ENCODE measurements at regions of chr6 and their contacts with region 1.

Region 1: GRCh38 chr6:30730601-30731435 is 10.7 kb downstream of the TUBB start:
- DNase-seq: no peak
- ATAC-seq: peak; percentile 87
- H3K4me3 ChIP-seq: no peak overlapping the region
- H3K27ac ChIP-seq: peak overlapping the region; percentile 32; the same call in 1 of the 2 replicates
- H3K4me1 ChIP-seq: peaks cover 13% of the 10 kb centered on the region
- H3K27me3 ChIP-seq: no peaks in the 10 kb centered on the region
- CTCF ChIP-seq: peak; percentile 83 to 96 (median 90)
- EP300 ChIP-seq: no peak
- POLR2A ChIP-seq: peak; percentile 42; the same call in 1 of the 2 replicates
- RAD21 ChIP-seq: peak; percentile 83

Region 2: DNA sequence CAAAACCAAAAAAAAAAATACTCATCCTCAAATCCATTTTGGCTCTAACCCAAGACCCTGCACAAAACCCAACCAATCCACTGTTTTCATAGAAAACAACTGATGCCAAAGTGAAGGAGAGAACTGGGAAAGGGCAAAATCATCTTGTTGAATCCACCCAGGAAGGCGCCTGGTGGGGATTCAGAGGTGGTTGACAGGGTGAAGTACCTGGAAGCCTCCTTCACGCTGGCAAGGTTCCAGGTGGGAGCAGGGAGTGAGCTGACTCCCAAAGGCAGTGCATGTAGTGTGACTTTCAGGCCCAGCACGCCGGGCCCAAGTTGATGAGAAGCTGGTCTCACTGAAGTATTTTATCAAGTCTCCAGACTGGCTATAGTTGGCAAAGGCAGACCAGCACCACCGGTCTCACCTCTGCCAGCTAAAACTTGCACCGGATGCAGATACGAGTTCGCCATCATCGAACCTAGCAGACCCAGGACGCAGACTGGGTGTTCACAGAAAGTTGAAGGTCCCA is 130.3 kb before region 1 on chr6:
- CTCF ChIA-PET with region 1: interaction called, 18 read pairs
- POLR2A ChIA-PET with region 1: no interaction called
- RAD21 ChIA-PET with region 1: no interaction called
- SMC1A ChIA-PET with region 1: interaction called, 6 read pairs
- in situ Hi-C with region 1: no loop called
- intact Hi-C with region 1: no loop called
- DNase-seq: no peak
- ATAC-seq: no peak
- H3K4me3 ChIP-seq: no peak overlapping the region
- H3K27ac ChIP-seq: no peak overlapping the region
- H3K4me1 ChIP-seq: no peaks in the 10 kb centered on the region; the same call in 1 of the 2 replicates
- H3K27me3 ChIP-seq: no peaks in the 10 kb centered on the region
- CTCF ChIP-seq: no peak
- EP300 ChIP-seq: no peak
- POLR2A ChIP-seq: peak; percentile 47; the same call in 1 of the 2 replicates
- RAD21 ChIP-seq: no peak

Region 3: DNA sequence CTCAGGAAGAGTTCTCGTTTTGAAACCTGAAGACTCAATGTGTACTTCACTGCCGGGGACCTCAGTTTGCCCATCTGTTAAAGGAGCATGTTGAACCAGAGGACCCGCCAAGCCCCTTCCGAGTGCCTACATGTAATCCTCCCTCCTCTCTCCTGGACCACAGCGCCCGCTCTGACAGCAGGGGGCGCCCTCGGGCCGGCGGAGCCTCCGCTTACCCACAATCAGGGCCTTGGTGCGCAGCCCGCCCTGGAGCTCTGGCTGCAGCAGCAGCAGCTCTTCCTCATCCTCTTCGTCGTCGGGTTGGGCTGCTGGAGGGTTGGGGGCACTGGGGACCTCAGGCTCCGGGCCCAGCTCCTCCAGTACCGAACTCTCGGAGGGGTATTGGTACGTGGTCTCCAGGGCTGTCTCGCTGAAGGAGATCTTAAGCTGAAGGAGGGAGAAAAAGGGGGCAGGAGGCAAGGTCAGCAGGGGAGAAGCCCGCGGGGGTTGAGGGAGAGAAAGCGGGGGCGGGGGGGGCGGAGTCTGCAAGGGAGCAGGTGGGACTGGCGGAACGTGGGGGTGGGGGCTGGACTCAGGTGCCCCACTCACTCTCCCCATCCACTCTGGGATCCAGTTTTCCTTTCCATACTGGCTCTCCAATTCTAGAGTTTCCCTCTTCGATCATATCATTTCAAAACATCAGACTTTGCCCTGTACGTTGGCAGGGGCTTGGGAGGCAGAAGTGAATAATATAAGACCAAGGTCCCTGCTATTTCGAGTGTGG is 51.7 kb before region 1 on chr6:
- CTCF ChIA-PET with region 1: interaction called, 487 read pairs
- POLR2A ChIA-PET with region 1: interaction called, 36 read pairs
- RAD21 ChIA-PET with region 1: interaction called, 232 read pairs
- SMC1A ChIA-PET with region 1: interaction called, 265 read pairs
- in situ Hi-C with region 1: no loop called
- intact Hi-C with region 1: loop called (anchors 2 kb)
- DNase-seq: no peak
- ATAC-seq: peak; percentile 79
- H3K4me3 ChIP-seq: peak overlapping the region; percentile 100
- H3K27ac ChIP-seq: peak overlapping the region; percentile 65
- H3K4me1 ChIP-seq: peaks cover 8% of the 10 kb centered on the region
- H3K27me3 ChIP-seq: no peaks in the 10 kb centered on the region
- CTCF ChIP-seq: peak; percentile 97 to 98 (median 98); a peak in 5 of 6 replicates
- EP300 ChIP-seq: no peak
- POLR2A ChIP-seq: 0 out of 2 replicates have a peak, but pooled peaks have one; percentile 29
- RAD21 ChIP-seq: peak; percentile 97

Region 4: DNA sequence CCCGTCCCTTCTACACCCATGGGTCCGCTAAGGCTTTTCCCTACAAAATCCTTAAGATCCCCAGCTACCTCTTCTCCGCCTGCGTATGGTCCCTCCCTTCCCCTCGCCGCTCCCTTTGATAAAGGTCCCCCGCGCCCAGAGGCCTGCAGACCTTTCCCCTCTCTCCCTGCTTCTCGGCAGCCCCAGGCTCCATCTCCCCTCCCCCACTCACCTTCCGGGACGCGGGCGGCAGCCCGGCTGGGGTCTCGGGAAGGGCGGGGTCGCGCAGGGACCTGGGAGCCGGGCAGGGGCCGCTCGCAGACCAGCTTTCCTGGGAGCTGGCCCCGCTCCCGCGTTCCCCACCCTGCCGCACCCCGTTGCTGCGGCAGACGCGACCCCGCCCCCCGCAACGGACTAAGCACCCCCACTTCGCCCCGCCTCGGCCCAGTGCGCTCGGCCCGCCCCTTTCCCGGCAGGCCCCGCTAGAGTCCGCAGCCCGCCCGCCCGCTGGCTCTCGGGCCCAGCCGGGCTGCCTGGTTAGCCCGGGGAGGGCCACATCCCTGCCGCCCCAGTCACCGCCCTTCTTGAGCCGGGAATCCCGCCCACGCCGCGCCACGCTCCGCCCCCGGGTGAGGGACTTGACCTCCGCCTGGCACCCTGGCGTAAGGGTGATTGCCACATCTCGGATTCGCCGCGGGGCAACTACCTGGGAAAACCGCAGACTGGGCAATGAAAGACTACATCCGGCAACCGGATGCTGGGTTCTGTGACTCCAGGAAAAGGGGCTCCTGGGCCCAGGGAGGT is 11.7 kb after region 1 on chr6 and contains the start of gene FLOT1:
- CTCF ChIA-PET with region 1: interaction called, 9 read pairs
- POLR2A ChIA-PET with region 1: interaction called, 3 read pairs
- RAD21 ChIA-PET with region 1: interaction called, 5 read pairs
- SMC1A ChIA-PET with region 1: interaction called, 20 read pairs
- in situ Hi-C with region 1: no loop called
- intact Hi-C with region 1: no loop called
- DNase-seq: peak; percentile 80
- ATAC-seq: peak; percentile 80
- H3K4me3 ChIP-seq: peak within 1 kb of the TSS; percentile 95
- H3K27ac ChIP-seq: peak within 1 kb of the TSS; percentile 72
- H3K4me1 ChIP-seq: peaks cover 23% of the 10 kb centered on the region
- H3K27me3 ChIP-seq: no peaks in the 10 kb centered on the region
- CTCF ChIP-seq: no peak
- EP300 ChIP-seq: peak in 1 of 2 experiments; percentile 12; a peak in 1 of 4 replicates
- POLR2A ChIP-seq: peak; percentile 83
- RAD21 ChIP-seq: no peak
- polyA plus RNA-seq, gene FLOT1: 12.3 to 16.8 TPM

Region 5: DNA sequence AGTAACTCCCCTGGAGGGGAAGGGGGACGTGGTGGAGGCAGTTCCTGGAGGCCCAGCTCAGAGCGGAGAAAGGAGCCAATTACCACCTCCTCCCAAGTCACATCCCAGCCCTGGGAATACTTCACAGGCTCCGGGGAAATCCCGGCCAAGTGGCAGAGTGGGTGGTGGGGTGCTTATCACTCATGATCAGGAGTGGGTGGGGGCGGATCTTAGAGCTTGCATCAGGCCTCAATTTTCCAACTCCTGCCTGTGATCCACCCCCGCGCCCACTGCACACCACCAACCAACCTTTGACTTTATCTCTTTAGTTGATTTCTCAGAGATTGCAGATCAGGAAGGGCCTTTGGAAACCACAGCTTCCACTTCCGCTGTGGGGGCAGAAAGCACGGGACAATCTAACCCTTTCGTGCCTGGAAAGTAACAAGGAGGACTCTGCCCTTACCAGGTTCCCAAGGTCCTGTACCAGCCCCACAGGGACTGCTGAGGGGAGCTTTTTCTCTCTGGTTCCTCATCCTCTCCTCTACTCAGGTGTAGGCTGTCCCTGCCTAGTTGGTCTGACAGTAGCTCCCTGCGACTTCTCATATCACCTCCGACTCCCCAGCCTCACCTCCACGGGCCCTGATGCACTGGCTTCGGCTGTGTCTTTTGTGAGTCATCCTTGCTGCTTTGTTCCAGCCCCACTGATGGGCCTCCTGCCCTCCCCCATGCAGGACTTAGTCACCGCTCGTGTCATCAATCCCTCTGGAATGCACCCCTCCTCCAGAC is 38.5 kb after region 1 on chr6:
- CTCF ChIA-PET with region 1: interaction called, 12 read pairs
- POLR2A ChIA-PET with region 1: interaction called, 89 read pairs
- RAD21 ChIA-PET with region 1: interaction called, 48 read pairs
- SMC1A ChIA-PET with region 1: interaction called, 122 read pairs
- in situ Hi-C with region 1: no loop called
- intact Hi-C with region 1: no loop called
- DNase-seq: no peak
- ATAC-seq: peak; percentile 38
- H3K4me3 ChIP-seq: no peak overlapping the region
- H3K27ac ChIP-seq: no peak overlapping the region; the same call in 1 of the 2 replicates
- H3K4me1 ChIP-seq: peaks cover 33% of the 10 kb centered on the region
- H3K27me3 ChIP-seq: no peaks in the 10 kb centered on the region
- CTCF ChIP-seq: no peak
- EP300 ChIP-seq: peak in 1 of 2 experiments; percentile 56; a peak in 2 of 4 replicates
- POLR2A ChIP-seq: no peak
- RAD21 ChIP-seq: no peak

Region 6: GRCh38 chr6:30877419-30878371 is 146.9 kb after region 1 on chr6:
- CTCF ChIA-PET with region 1: interaction called, 12 read pairs
- POLR2A ChIA-PET with region 1: interaction called, 4 read pairs
- RAD21 ChIA-PET with region 1: interaction called, 9 read pairs
- SMC1A ChIA-PET with region 1: interaction called, 12 read pairs
- in situ Hi-C with region 1: no loop called
- intact Hi-C with region 1: loop called (anchors 2 kb)
- DNase-seq: peak; percentile 59
- ATAC-seq: peak; percentile 91
- H3K4me3 ChIP-seq: peak overlapping the region; percentile 61
- H3K27ac ChIP-seq: peak overlapping the region; percentile 68
- H3K4me1 ChIP-seq: peaks cover 21% of the 10 kb centered on the region
- H3K27me3 ChIP-seq: no peaks in the 10 kb centered on the region
- CTCF ChIP-seq: peak; percentile 91 to 95 (median 93); a peak in 5 of 6 replicates
- EP300 ChIP-seq: no peak
- POLR2A ChIP-seq: 0 out of 2 replicates have a peak, but pooled peaks have one; percentile 28
- RAD21 ChIP-seq: peak; percentile 95